CD4-positive, alpha-beta memory T cell (primary cell): ENCODE measurements at regions of chr17 and their contacts with region 1.

Region 1: DNA sequence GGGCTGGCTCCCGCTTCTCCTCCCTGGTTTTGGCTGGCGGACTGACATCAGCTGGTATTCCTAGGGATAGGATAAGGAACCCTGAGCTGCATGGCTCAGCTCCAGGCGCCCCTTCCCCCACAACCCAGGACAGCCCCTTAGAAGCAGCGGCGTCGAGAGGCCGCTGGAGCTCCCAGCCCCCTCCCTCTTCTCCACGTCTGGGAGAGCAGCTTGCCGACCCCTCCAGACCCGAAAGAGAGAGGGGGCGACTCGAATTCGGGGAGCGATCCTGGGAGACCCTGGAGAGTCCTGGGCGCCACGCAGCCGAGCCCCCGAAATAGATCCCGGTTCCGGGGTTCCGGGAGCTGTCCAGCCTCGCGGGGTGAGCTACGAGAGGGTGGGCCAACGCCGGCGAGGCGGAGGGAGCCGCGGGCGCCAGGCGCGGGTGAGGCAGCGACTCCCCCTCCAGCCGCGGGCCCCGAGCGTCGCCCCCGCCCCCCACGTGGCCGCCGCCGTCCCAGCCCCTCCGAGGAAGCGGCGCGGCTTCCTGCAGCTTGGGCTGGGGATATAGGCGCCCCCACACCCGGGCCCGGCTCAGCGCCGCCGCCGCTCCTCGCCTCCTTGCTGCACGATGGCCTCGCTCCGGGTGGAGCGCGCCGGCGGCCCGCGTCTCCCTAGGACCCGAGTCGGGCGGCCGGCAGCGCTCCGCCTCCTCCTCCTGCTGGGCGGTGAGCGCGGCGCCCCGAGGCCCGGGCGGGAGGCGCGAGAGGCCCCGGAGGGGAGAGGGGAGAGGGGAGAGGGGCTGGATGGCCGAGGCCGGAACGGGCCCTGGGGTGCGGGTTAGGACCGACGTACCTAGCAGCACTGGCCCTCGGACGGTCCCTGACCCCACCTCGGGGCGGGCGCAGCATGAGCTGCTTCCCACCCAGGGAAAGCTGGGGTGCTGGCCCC is at the start of gene RAMP2:
- DNase-seq: no peak
- H3K4me3 ChIP-seq: no peak within 1 kb of the TSS
- H3K4me3 Mint-ChIP-seq: peak within 1 kb of the TSS; percentile 4 to 75 (median 48)
- H3K27ac ChIP-seq: no peak within 1 kb of the TSS
- H3K27ac Mint-ChIP-seq: peak within 1 kb of the TSS in 2 of 7 donors; percentile 36 to 46
- H3K4me1 ChIP-seq: peaks cover 7% of the 10 kb centered on the region
- H3K4me1 Mint-ChIP-seq: peaks cover 2 to 10% (median 4%) of the 10 kb centered on the region in 4 donors
- H3K27me3 ChIP-seq: peaks cover 34% of the 10 kb centered on the region
- H3K27me3 Mint-ChIP-seq: peaks cover 35 to 52% of the 10 kb centered on the region in 2 donors
- total RNA-seq, gene RAMP2: not detected

Region 2: GRCh38 chr17:42484304-42484703 is 276.6 kb before region 1 on chr17:
- CTCF ChIA-PET with region 1: no interaction called
- POLR2A ChIA-PET with region 1: no interaction called
- intact Hi-C with region 1: no loop called
- DNase-seq: peak; percentile 87 to 92 (median 88)
- H3K4me3 ChIP-seq: peak overlapping the region in 1 of 2 donors; percentile 5
- H3K4me3 Mint-ChIP-seq: peak overlapping the region; percentile 10 to 77 (median 71)
- H3K27ac ChIP-seq: no peak overlapping the region
- H3K27ac Mint-ChIP-seq: peak overlapping the region in 6 of 7 donors; percentile 5 to 93 (median 70)
- H3K4me1 ChIP-seq: peaks cover 30% of the 10 kb centered on the region
- H3K4me1 Mint-ChIP-seq: peaks cover 19 to 41% (median 30%) of the 10 kb centered on the region in 4 donors
- H3K27me3 ChIP-seq: no peaks in the 10 kb centered on the region
- H3K27me3 Mint-ChIP-seq: peaks cover 0 to 1% of the 10 kb centered on the region in 2 donors

Region 3: DNA sequence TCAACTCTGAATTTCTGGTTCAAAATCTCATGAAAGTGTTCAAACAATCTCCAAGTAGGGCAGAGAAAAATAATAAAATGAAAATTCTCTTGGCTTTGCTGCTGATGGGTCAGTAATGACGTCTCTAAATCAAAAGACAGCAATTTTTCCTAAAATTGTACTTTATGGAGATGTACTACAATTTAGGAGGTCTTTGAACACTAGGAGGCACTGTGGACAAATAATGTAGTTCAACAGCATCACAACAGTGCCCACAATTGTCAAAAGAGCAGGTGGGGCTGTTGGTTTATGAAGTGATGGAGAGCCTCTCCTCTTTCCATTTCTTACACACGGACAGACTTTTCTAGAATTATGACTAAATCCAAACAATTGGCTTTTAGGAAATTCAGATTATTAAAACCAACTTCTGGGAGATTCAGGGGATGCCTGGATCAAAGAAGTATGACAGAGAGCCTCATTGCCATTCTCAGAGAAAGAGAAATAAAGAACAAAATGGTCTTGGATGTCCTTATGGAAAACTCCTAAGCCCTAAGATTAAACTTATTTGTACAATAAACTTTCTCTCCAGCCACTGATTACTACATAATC is 39.8 kb before region 1 on chr17:
- CTCF ChIA-PET with region 1: interaction called, 20 read pairs
- POLR2A ChIA-PET with region 1: no interaction called
- intact Hi-C with region 1: no loop called
- DNase-seq: peak in 4 of 5 donors; percentile 55 to 68 (median 62)
- H3K4me3 ChIP-seq: no peak overlapping the region
- H3K4me3 Mint-ChIP-seq: no peak overlapping the region
- H3K27ac ChIP-seq: no peak overlapping the region
- H3K27ac Mint-ChIP-seq: no peak overlapping the region
- H3K4me1 ChIP-seq: no peaks in the 10 kb centered on the region
- H3K4me1 Mint-ChIP-seq: peaks cover 3 to 14% (median 11%) of the 10 kb centered on the region in 4 donors
- H3K27me3 ChIP-seq: no peaks in the 10 kb centered on the region
- H3K27me3 Mint-ChIP-seq: no peaks in the 10 kb centered on the region

Region 4: GRCh38 chr17:42750739-42751344 is 10.1 kb before region 1 on chr17:
- CTCF ChIA-PET with region 1: interaction called, 15 read pairs
- POLR2A ChIA-PET with region 1: no interaction called
- intact Hi-C with region 1: no loop called
- DNase-seq: no peak
- H3K4me3 ChIP-seq: no peak overlapping the region
- H3K4me3 Mint-ChIP-seq: no peak overlapping the region
- H3K27ac ChIP-seq: no peak overlapping the region
- H3K27ac Mint-ChIP-seq: no peak overlapping the region
- H3K4me1 ChIP-seq: no peaks in the 10 kb centered on the region
- H3K4me1 Mint-ChIP-seq: no peaks in the 10 kb centered on the region
- H3K27me3 ChIP-seq: no peaks in the 10 kb centered on the region
- H3K27me3 Mint-ChIP-seq: peaks cover 10 to 20% of the 10 kb centered on the region in 2 donors

Region 5: DNA sequence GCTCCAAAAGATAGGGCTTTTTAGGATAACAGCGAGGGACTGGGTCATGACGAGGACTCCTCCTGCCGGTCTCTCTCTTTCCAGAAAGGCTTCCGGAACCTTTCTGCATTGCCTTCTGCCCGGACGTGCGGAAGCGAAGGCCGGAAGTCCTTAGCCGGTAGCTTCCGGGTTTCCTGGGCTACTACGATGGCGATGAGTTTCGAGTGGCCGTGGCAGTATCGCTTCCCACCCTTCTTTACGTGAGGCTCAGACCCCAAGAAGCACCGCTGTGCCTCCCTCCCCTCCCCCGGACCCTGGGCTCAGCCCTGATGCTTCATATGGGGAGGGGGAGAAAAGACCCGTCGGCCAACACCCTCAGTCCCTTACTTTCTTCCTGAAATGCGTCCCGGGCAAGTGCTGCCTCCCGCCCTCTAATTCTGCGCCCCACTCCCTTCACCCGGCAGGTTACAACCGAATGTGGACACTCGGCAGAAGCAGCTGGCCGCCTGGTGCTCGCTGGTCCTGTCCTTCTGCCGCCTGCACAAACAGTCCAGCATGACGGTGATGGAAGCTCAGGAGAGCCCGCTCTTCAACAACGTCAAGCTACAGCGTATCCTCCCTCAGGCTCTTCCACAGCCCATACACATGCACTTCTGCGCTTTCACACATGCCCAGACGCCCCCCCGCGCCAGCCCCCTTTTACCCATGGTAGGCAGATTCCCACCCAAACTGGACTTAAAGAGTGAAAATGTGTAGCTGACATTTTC is 12.5 kb after region 1 on chr17 and contains the start of gene VPS25:
- CTCF ChIA-PET with region 1: interaction called, 16 read pairs
- POLR2A ChIA-PET with region 1: interaction called, 13 read pairs
- intact Hi-C with region 1: no loop called
- DNase-seq: peak; percentile 70 to 77 (median 71)
- H3K4me3 ChIP-seq: peak within 1 kb of the TSS; percentile 90 to 100
- H3K4me3 Mint-ChIP-seq: peak within 1 kb of the TSS; percentile 98 to 99 (median 99)
- H3K27ac ChIP-seq: peak within 1 kb of the TSS; percentile 81
- H3K27ac Mint-ChIP-seq: peak within 1 kb of the TSS; percentile 91 to 99 (median 98)
- H3K4me1 ChIP-seq: peaks cover 17% of the 10 kb centered on the region
- H3K4me1 Mint-ChIP-seq: peaks cover 11 to 28% (median 19%) of the 10 kb centered on the region in 4 donors
- H3K27me3 ChIP-seq: no peaks in the 10 kb centered on the region
- H3K27me3 Mint-ChIP-seq: no peaks in the 10 kb centered on the region
- total RNA-seq, gene VPS25: 39.3 to 43.6 TPM